Common myeloid progenitor, CD34-positive (primary cell): ENCODE measurements at regions of chr4 and their contacts with region 1.

Region 1: DNA sequence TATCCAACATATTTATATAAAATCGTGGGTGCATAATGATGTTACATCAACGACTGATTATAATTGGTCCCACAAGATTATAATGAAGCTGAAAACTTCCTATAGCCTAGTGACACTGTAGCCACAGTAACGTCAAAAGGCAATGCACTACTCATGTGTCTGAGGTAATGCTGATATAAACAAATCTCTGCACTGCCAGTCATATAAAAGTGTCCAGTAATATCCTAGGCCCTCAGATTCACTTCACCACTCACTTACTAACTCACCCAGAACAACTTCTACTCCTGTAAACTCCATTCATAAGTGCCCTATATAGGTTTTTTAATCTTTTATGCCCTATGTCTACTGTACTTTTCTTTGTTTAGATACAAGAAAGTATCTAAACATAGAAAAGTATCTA is 18.8 kb downstream of the FRYL start:
- DNase-seq: no peak
- H3K4me3 ChIP-seq: no peak overlapping the region
- H3K27ac ChIP-seq: no peak overlapping the region
- H3K4me1 ChIP-seq: peaks cover 0 to 3% (median under 1%) of the 10 kb centered on the region in 4 experiments
- H3K27me3 ChIP-seq: no peaks in the 10 kb centered on the region

Region 2: GRCh38 chr4:48748949-48749596 is 12.2 kb before region 1 on chr4:
- CTCF ChIA-PET with region 1: interaction called, 10 read pairs
- POLR2A ChIA-PET with region 1: no interaction called
- DNase-seq: peak; percentile 16 to 68 (median 51)
- H3K4me3 ChIP-seq: no peak overlapping the region
- H3K27ac ChIP-seq: no peak overlapping the region
- H3K4me1 ChIP-seq: peaks cover 7 to 42% (median 23%) of the 10 kb centered on the region in 4 experiments
- H3K27me3 ChIP-seq: no peaks in the 10 kb centered on the region